CD8-positive, alpha-beta T cell (primary cell): ENCODE measurements at regions of chr15 and their contacts with region 1.

Region 1: DNA sequence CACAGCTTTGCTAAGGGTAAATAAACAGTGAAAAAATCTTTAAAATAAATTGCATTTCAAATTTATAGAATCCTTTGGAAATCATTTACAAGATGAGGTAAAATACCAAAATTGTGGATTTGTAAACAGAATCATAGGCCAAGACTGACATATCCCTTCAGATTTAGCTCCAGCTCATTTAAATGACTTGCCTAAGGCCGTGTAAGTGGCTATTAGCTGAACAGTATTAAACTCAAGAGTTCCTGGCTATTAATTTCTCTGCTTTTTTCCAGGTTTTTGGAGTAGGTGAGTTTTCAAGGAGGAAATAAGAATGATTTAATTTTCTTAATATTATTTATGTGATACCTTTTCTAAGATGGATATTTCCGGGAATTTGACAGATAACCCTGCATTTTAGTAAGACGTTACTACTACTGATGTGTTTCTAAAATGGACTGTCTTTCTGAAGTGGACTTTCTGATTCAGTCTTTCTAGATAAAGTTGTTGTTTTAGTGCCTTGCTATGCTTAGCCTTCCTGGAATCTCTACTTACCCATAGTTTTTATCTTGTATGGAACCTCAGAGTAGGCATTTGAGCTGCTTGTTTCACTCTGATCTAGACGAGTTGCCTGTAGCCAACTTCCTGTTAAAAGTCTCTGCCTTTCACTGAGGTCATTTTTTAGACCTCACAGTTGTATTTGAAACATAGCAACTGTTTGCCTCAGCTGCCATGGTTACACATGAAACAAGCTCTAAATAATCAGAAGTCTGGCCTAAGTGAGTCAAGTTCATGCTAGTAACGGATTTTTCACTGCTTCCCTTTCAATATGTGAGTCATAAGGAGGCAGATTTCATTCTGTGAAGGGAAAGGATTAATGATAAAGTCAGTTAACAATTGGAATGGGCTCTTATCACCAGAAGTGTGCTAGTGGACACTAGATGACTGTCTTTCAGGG is 127.0 kb downstream of the KLHL25 start:
- DNase-seq: peak in 8 of 9 experiments; percentile 23 to 97 (median 62)
- ATAC-seq: peak; percentile 91
- H3K4me3 ChIP-seq: no peak overlapping the region
- H3K4me3 Mint-ChIP-seq: peak overlapping the region; percentile 40
- H3K27ac ChIP-seq: peak overlapping the region; percentile 53 to 96
- H3K27ac Mint-ChIP-seq: peak overlapping the region; percentile 92
- H3K4me1 ChIP-seq: peaks cover 13% of the 10 kb centered on the region
- H3K4me1 Mint-ChIP-seq: peaks cover 22% of the 10 kb centered on the region
- H3K27me3 ChIP-seq: no peaks in the 10 kb centered on the region
- H3K27me3 Mint-ChIP-seq: no peaks in the 10 kb centered on the region
- CTCF ChIP-seq: no peak

Region 2: DNA sequence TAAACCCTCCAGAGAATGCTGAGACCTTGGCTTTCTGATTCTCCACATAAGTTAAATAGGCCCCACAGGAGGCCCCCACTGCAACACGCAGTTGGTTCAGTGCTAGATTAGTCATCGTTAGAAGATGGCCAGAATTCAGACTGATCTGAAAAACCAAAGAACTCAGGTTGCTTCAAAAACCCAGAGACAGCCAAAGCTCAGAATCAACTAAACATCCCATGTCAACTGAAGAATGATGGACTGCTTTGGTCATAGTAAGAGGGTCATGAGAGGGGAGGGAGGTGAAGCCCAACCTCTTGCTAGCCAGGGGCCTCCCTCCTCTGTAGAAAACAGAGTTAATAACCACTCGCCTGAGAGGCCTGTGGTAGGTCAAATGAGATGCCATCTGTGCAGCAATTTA is 194.3 kb before region 1 on chr15:
- CTCF ChIA-PET with region 1: no interaction called
- POLR2A ChIA-PET with region 1: no interaction called
- intact Hi-C with region 1: no loop called
- DNase-seq: no peak
- ATAC-seq: no peak
- H3K4me3 ChIP-seq: no peak overlapping the region
- H3K4me3 Mint-ChIP-seq: no peak overlapping the region
- H3K27ac ChIP-seq: no peak overlapping the region
- H3K27ac Mint-ChIP-seq: no peak overlapping the region
- H3K4me1 ChIP-seq: peaks cover 52% of the 10 kb centered on the region
- H3K4me1 Mint-ChIP-seq: peaks cover 81% of the 10 kb centered on the region
- H3K27me3 ChIP-seq: no peaks in the 10 kb centered on the region
- H3K27me3 Mint-ChIP-seq: no peaks in the 10 kb centered on the region
- CTCF ChIP-seq: no peak

Region 3: DNA sequence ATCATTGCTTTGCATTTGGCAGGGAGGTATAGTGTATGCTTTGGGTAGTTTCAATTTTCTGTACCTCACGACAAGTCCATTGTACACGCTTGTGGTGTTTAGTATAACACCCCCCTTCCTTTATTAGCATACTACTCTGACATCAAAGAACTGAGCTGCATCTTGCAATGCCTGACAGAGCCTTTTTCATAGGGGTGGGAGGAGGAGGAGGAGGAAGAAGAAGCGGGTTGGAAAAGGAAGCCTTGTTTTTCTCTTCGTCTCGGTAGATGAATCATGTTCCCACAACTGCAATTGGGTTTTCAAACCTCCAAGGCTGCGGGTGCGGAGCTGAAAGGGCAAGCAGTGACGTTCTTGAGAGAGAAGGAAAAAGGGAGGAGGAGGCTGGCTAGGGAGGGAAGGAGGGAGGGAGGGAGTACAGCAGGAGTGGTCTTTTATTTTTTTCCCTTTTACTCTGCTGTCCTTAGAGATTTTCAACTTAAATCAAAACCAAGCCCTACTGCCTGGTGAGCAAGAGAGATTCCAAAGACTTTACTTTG is 48.7 kb before region 1 on chr15:
- CTCF ChIA-PET with region 1: interaction called, 3 read pairs
- POLR2A ChIA-PET with region 1: no interaction called
- intact Hi-C with region 1: loop called in 1 of 2 experiments (anchors 5 kb)
- DNase-seq: peak in 8 of 9 experiments; percentile 30 to 82 (median 59)
- ATAC-seq: peak; percentile 84
- H3K4me3 ChIP-seq: peak overlapping the region in 1 of 2 experiments; percentile 27
- H3K4me3 Mint-ChIP-seq: no peak overlapping the region
- H3K27ac ChIP-seq: peak overlapping the region in 1 of 2 experiments; percentile 58
- H3K27ac Mint-ChIP-seq: no peak overlapping the region
- H3K4me1 ChIP-seq: peaks cover 38% of the 10 kb centered on the region
- H3K4me1 Mint-ChIP-seq: peaks cover 32% of the 10 kb centered on the region
- H3K27me3 ChIP-seq: no peaks in the 10 kb centered on the region
- H3K27me3 Mint-ChIP-seq: no peaks in the 10 kb centered on the region
- CTCF ChIP-seq: no peak

Region 4: GRCh38 chr15:85646538-85647091 is 21.1 kb before region 1 on chr15:
- CTCF ChIA-PET with region 1: no interaction called
- POLR2A ChIA-PET with region 1: interaction called, 5 read pairs
- intact Hi-C with region 1: loop called in 1 of 2 experiments (anchors 2 kb)
- DNase-seq: peak in 7 of 9 experiments; percentile 17 to 91 (median 54)
- ATAC-seq: peak; percentile 89
- H3K4me3 ChIP-seq: no peak overlapping the region
- H3K4me3 Mint-ChIP-seq: peak overlapping the region; percentile 40
- H3K27ac ChIP-seq: peak overlapping the region; percentile 5 to 72
- H3K27ac Mint-ChIP-seq: peak overlapping the region; percentile 79
- H3K4me1 ChIP-seq: peaks cover 22% of the 10 kb centered on the region
- H3K4me1 Mint-ChIP-seq: peaks cover 44% of the 10 kb centered on the region
- H3K27me3 ChIP-seq: no peaks in the 10 kb centered on the region
- H3K27me3 Mint-ChIP-seq: no peaks in the 10 kb centered on the region
- CTCF ChIP-seq: no peak

Region 5: DNA sequence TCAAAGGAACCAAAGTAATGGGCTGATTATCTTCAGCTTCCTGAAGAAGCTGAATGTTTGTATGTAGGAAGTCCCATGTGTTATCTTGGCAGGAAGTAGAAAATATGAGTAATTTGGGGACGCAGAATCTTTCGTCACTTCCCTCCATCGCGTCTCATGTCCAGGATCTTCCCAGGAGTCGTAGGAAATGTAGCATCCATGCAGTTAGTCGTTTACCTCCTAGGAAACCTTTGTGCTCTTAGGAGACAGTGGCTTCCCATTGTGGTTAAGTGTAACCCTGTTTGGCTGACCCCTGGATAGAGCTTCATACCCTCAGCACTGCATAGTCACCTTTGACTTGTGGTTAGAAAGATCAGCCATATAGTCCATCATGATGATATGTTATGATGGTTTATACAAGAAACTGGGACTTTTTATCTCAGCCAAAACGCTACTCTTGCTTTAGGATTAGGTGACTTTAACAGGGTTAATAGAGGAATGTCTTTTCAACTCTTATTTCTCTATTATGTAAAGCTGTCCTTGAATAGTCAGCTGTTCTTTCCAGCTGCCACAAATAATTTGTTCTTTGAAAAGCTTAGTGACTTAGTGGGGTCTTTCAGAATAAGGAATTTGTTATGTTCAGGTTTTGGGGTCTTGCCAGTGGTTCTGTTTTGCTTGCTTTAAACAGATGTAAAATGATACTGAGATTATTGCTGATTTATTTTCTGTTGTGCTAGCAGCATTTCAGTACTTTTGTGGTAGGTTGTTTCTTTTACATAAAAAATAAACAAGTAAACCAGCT is 34.8 kb after region 1 on chr15:
- CTCF ChIA-PET with region 1: no interaction called
- POLR2A ChIA-PET with region 1: interaction called, 3 read pairs
- intact Hi-C with region 1: loop called (anchors 1 to 2 kb)
- DNase-seq: peak in 5 of 9 experiments; percentile 17 to 88 (median 39)
- ATAC-seq: peak; percentile 40
- H3K4me3 ChIP-seq: peak overlapping the region; percentile 3 to 24
- H3K4me3 Mint-ChIP-seq: peak overlapping the region; percentile 70
- H3K27ac ChIP-seq: peak overlapping the region; percentile 70 to 97
- H3K27ac Mint-ChIP-seq: peak overlapping the region; percentile 94
- H3K4me1 ChIP-seq: peaks cover 64% of the 10 kb centered on the region
- H3K4me1 Mint-ChIP-seq: peaks cover 78% of the 10 kb centered on the region
- H3K27me3 ChIP-seq: no peaks in the 10 kb centered on the region
- H3K27me3 Mint-ChIP-seq: no peaks in the 10 kb centered on the region
- CTCF ChIP-seq: no peak

Region 6: GRCh38 chr15:85707519-85708338 is 40.0 kb after region 1 on chr15:
- CTCF ChIA-PET with region 1: no interaction called
- POLR2A ChIA-PET with region 1: interaction called, 3 read pairs
- intact Hi-C with region 1: loop called (anchors 1 to 2 kb)
- DNase-seq: no peak
- ATAC-seq: peak; percentile 22
- H3K4me3 ChIP-seq: peak overlapping the region; percentile 32 to 40
- H3K4me3 Mint-ChIP-seq: peak overlapping the region; percentile 77
- H3K27ac ChIP-seq: peak overlapping the region; percentile 66 to 97
- H3K27ac Mint-ChIP-seq: peak overlapping the region; percentile 99
- H3K4me1 ChIP-seq: peaks cover 56% of the 10 kb centered on the region
- H3K4me1 Mint-ChIP-seq: peaks cover 82% of the 10 kb centered on the region
- H3K27me3 ChIP-seq: no peaks in the 10 kb centered on the region
- H3K27me3 Mint-ChIP-seq: no peaks in the 10 kb centered on the region
- CTCF ChIP-seq: no peak